GM13976 (cell line): ENCODE measurements at regions of chr1 and their contacts with region 1.

Region 1: GRCh38 chr1:45299981-45300668 is 26.6 kb upstream of the HPDL start:
- DNase-seq: peak; percentile 69
- CTCF ChIP-seq: peak; percentile 61

Region 2: DNA sequence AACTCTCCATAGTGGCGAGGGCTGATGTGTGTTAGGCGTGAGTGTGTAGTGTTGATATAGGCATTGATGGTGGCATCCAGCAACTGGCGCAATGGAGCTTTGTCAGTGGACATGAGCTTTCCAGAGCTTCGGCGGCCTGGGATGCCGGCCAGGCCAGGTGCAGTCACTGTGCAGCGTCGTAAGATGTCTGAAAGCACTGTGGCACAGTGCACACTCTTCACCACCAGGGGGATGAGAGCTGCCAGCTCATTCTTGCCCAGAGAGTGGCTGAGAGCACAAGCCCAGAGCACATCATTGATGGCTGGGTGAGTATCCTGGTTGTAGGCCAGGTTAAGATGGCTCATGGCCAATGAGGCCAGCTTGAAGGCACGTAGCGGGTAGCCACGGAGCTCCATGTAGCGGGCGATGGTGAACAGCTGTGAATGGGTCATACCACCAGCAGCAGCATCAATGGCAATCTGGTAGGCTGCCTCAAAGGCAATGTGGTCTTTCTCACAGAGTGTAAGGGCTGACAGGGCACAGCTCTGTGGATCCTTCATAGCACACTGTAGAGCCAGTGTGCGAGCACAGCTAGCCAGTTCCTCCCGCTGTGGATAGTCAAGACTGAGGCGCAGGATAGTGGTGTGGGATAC is 281.4 kb before region 1 on chr1:
- in situ Hi-C with region 1: loop called (anchors 5 kb)
- DNase-seq: no peak
- CTCF ChIP-seq: peak; percentile 58